Caco-2 (cell line): ENCODE measurements at regions of chr11 and their contacts with region 1.

Region 1: DNA sequence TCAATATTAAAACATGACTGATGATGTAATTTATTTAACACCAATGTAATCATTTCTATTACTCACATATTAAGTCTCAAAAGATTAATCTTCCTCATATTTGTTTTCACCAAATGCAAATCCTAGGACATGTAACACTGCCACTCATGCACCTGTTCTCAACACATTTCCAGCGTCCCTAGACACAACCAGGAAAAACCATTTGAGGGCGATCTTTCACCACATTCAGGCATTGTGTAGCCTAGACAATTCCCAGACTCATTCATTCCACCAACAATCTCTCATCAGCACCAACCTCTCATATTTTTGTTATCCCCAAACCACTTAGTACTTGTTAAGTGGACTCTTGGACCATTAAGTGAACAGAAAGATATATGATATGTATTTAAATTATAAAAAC is 66.1 kb downstream of the SLC36A4 start:
- DNase-seq: peak in 1 of 2 experiments; percentile 41
- H3K4me3 ChIP-seq: no peak overlapping the region
- H3K4me3 Mint-ChIP-seq: no peak overlapping the region
- H3K27ac Mint-ChIP-seq: no peak overlapping the region
- H3K4me1 ChIP-seq: no peaks in the 10 kb centered on the region
- H3K4me1 Mint-ChIP-seq: no peaks in the 10 kb centered on the region
- H3K27me3 ChIP-seq: no peaks in the 10 kb centered on the region
- H3K27me3 Mint-ChIP-seq: peaks cover 23% of the 10 kb centered on the region
- CTCF ChIP-seq: peak in 1 of 2 experiments; percentile 38

Region 2: GRCh38 chr11:93225662-93226061 is 94.0 kb after region 1 on chr11:
- CTCF ChIA-PET with region 1: no interaction called
- POLR2A ChIA-PET with region 1: no interaction called
- intact Hi-C with region 1: loop called (anchors 1 kb)
- DNase-seq: no peak
- H3K4me3 ChIP-seq: no peak overlapping the region
- H3K4me3 Mint-ChIP-seq: no peak overlapping the region
- H3K27ac Mint-ChIP-seq: no peak overlapping the region
- H3K4me1 ChIP-seq: peaks cover 5% of the 10 kb centered on the region; the same call in 1 of the 2 replicates
- H3K4me1 Mint-ChIP-seq: peaks cover 11% of the 10 kb centered on the region
- H3K27me3 ChIP-seq: 0 out of 2 replicates have a peak, but pooled peaks cover 1% of the 10 kb centered on the region
- H3K27me3 Mint-ChIP-seq: peaks cover 10% of the 10 kb centered on the region
- CTCF ChIP-seq: peak in 1 of 2 experiments; percentile 38